Breast epithelium (tissue), 4 donors: ENCODE measurements at regions of chr14 and their contacts with region 1.

Region 1: GRCh38 chr14:99563233-99564129 is 40.5 kb downstream of the CCDC85C start:
- DNase-seq: peak; percentile 64 to 83
- H3K4me3 ChIP-seq: no peak overlapping the region
- H3K27ac ChIP-seq: peak overlapping the region; percentile 79 to 80
- H3K4me1 ChIP-seq: peaks cover 21 to 56% of the 10 kb centered on the region in 2 donors
- H3K27me3 ChIP-seq: no peaks in the 10 kb centered on the region
- CTCF ChIP-seq: peak in 2 of 3 donors; percentile 41 to 50
- POLR2A ChIP-seq: no peak

Region 2: DNA sequence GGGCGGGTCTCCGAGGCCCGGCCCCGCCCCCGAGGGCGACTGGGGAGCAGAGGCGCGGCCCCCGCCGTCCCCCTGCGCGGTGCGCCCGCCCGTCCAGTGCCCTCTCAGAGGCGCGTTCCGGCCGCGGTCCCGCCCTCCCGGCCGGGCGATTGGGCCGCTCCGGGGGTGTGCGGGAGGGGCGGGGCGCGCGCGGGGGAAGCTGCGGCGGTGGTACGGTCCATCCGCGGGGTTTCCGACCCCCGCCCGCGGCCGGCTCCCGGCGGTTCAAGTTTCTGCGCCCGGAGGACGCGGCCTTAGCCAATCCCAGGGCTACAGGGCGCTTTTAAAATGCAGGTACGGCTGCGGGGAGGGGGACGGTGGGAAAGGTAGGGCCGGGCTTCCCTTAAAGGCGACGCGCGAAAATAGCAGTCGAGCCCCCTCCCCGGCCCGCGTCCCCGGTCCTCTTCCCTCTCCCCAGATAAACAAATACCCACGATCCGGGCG is 40.8 kb after region 1 on chr14:
- intact Hi-C with region 1: loop called (anchors 5 kb)
- DNase-seq: peak; percentile 95
- H3K4me3 ChIP-seq: peak overlapping the region; percentile 76 to 88 (median 77)
- H3K27ac ChIP-seq: peak overlapping the region; percentile 89 to 94
- H3K4me1 ChIP-seq: peaks cover 6 to 14% of the 10 kb centered on the region in 2 donors
- H3K27me3 ChIP-seq: no peaks in the 10 kb centered on the region
- CTCF ChIP-seq: no peak
- POLR2A ChIP-seq: peak; percentile 12